Posterior cingulate gyrus (tissue), 11 donors: ENCODE measurements at regions of chr1 and their contacts with region 1.

Region 1: GRCh38 chr1:209692745-209693504 is 11.7 kb upstream of the HSD11B1 start:
- DNase-seq: peak; percentile 33 to 94 (median 80)

Region 2: DNA sequence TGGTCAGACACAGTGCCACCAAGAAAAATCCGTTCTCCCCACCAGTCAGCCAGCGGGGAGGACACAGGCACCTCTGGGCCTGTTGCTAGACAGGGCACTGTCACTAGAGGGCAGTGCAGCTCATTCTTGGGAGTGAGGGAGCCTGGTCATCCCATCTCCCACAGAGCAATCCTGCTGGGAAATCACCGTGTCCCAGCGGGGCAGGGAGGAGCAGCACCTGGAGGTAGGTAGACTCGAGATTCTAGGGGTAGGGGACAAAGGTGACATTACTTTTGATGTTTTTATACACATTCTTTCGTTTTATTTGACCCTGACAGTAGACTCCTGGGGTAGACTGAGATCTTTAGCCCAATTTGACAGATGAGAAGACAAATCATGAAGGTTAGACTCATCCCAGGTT is 116.1 kb before region 1 on chr1:
- intact Hi-C with region 1: loop called (anchors 2 kb)
- DNase-seq: peak; percentile 72 to 97 (median 88)

Region 3: GRCh38 chr1:209601809-209602657 is 90.9 kb before region 1 on chr1:
- intact Hi-C with region 1: loop called (anchors 1 kb)
- DNase-seq: peak in 5 of 10 donors; percentile 51 to 92 (median 59)

Region 4: GRCh38 chr1:209643285-209644020 is 49.5 kb before region 1 on chr1:
- intact Hi-C with region 1: loop called (anchors 5 kb)
- DNase-seq: peak in 9 of 10 donors; percentile 56 to 94 (median 67)

Region 5: GRCh38 chr1:209747580-209748262 is 54.8 kb after region 1 on chr1:
- intact Hi-C with region 1: loop called (anchors 2 kb)
- DNase-seq: peak; percentile 61 to 97 (median 78)